Dendritic cell treated with granulocyte-macrophage colony-stimulating factor and Interleukin-4, amounts not matched to agents 40 ng/mL and 50 ng/mL, for 4 days (primary cell): ENCODE measurements at regions of chr4 and their contacts with region 1.

Region 1: DNA sequence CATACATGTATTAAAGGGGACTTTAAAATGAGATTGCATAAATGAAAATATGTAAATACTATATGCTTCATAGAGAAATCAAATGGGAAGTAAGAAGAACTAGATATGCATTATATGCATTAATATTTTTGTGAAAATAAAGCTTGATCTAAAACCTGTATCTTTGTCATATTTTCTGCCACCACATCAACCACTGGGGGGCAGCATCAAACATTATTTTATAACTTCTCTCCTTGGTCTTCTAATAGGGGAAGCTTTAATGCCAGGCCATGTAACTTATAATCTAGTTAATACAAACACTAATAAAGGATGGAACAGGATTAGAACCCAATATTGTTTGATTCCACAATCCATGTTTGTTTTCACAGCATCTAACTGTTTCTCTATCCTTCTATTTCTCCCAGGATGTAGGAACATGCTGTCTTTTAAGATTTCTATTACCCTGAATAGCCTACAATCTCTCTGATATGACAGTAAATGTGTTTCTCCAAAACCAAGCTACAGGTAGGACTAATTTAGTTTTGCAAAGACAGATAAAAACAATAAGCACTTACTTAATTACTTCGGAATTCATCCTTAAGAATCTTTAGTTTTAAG is 10.0 kb downstream of the QRFPR start:
- H3K4me3 Mint-ChIP-seq: no peak overlapping the region
- H3K27ac Mint-ChIP-seq: no peak overlapping the region
- H3K4me1 Mint-ChIP-seq: no peaks in the 10 kb centered on the region
- H3K27me3 Mint-ChIP-seq: peaks cover 7% of the 10 kb centered on the region

Region 2: DNA sequence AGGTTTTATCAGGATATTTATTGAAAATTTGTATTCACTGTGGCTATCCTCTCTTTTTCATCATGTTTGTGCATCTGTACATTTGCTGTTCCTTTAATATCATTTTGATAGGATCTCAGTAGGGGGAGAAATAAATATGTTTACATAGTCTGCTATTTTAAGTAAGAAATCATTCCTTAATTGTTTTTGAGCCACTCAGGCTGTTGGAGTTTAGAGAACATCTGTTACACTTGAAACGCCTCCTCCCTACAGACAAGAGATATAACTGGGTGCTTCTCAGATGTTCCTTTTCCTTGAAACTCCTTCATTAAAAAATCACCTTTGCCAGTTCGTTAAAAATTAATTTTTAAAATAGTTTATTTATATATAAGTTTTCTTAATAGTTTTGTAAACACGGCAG is 49.4 kb before region 1 on chr4:
- intact Hi-C with region 1: no loop called
- H3K4me3 Mint-ChIP-seq: no peak overlapping the region
- H3K27ac Mint-ChIP-seq: no peak overlapping the region
- H3K4me1 Mint-ChIP-seq: no peaks in the 10 kb centered on the region
- H3K27me3 Mint-ChIP-seq: peaks cover 2% of the 10 kb centered on the region

Region 3: DNA sequence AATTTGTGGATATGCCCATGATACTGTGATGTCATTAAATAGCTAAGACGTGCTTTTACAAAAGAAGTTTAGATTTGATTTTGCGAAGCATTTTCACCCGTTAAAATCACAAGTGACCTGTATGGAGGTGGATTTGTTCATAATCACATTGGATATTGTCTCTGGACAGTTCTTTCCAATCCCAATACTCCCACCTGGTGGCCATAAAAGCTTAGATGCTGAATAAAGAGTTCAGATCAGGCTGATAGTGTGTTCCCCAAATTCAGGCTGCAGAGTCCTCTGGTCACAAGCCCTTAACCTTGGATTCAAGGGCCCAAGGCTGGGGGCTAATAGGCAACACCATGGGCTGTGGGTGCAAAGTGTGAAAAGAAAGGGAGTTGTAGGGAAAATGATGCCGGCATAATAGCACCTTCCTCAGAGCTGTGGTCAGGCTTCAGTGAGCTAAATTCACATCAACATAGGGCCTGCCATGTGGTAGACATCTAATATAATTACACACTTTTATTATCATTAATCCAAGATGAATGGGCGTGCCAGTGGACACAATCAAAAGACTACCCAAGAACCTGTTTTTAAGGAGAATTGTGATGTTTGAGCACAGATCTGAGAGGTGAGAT is 366.0 kb after region 1 on chr4:
- intact Hi-C with region 1: loop called (anchors 2 kb)
- H3K4me3 Mint-ChIP-seq: no peak overlapping the region
- H3K27ac Mint-ChIP-seq: no peak overlapping the region
- H3K4me1 Mint-ChIP-seq: no peaks in the 10 kb centered on the region
- H3K27me3 Mint-ChIP-seq: peaks cover 7% of the 10 kb centered on the region